ENCODE measurements at regions of chr1 and their contacts with region 1.

Region 1: GRCh38 chr1:22665752-22666151 is 12.7 kb downstream of the C1QB start:
- DNase-seq: no peak
- H3K4me3 ChIP-seq: no peak overlapping the region
- H3K27ac ChIP-seq: peak overlapping the region in 3 of 8 donors; percentile 23 to 54 (median 26)
- H3K4me1 ChIP-seq: peaks cover 0 to 30% (median 14%) of the 10 kb centered on the region in 6 donors
- H3K27me3 ChIP-seq: peaks cover 0 to 18% (median 0%) of the 10 kb centered on the region in 7 donors
- CTCF ChIP-seq: peak in 9 of 11 experiments; percentile 13 to 67 (median 51)
- POLR2A ChIP-seq: no peak

Region 2: DNA sequence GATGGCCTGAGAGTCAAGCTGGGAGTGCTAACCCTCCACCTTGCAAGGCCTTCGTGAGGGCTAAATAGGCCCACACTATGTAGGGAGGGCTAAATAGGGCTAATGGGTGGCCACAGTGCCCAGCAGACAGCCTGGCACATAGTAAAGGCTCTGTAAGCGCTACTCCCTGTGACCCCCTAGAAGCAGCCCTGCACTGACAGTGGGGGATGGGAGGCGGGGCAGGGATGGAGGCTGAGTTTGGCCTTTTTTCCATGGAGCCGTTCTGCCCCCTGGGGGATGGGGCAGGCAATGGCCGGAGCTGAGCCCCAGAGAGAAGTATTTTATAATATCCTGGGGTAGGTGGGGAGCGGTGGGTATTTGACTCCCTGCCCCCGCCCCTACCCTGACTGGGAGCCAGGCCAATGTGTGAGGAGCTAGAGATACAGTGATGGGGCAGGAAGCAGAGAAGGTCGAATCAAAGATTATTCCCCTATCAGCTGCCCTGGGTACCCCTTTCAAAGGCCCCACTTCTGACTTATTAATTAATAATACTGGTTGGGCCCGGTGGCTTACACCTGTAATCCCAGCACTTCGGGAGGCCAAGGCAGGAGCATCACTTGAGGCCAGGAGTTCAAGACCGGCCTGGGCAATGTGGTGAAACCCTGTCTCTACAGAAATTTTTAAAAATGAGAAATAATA is 264.6 kb after region 1 on chr1:
- intact Hi-C with region 1: loop called (anchors 10 kb)
- DNase-seq: peak; percentile 57
- H3K4me3 ChIP-seq: no peak overlapping the region
- H3K27ac ChIP-seq: no peak overlapping the region
- H3K4me1 ChIP-seq: no peaks in the 10 kb centered on the region
- H3K27me3 ChIP-seq: peaks cover 0 to 6% (median 0%) of the 10 kb centered on the region in 7 donors
- CTCF ChIP-seq: peak; percentile 36 to 74 (median 63)
- POLR2A ChIP-seq: no peak